Vagina (tissue), 2 donors: ENCODE measurements at regions of chr5 and their contacts with region 1.

Region 1: DNA sequence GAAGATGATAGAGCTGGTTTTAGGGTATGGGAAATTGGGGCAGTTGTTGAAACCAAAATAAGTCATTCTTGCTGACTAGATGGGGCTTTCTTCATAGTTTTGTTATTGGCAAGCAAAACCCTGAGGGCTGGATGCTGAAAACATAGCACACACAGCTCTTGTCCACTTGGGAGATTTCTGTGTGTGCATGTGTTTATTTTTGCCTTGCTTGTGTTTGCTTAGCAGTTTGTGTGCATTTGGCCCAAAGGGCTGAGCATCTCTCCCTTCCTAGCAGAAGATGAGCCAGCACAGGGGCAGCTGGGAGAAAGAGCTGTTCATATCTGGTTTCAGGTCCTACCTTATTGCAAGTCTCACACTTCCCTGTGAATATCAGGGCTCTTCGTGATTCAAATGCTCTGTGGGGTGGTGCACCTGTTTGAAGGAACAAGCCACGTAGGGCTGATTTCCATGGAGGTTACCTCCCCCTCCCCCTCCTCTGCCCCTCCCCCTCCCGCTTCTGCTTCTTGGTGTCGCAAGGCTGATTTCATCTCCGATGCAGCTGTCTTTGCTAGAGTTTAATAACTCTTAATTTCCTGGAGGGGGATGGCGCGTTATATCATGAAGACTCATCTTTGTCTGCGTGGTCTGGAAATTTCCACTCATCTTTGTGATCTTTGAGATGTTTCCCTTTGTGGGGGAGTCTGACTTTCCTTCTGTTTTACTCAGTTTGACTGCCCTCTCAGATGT is 296.5 kb downstream of the ARHGAP26 start:
- DNase-seq: no peak
- H3K4me3 ChIP-seq: no peak overlapping the region
- H3K27ac ChIP-seq: peak overlapping the region; percentile 37
- H3K4me1 ChIP-seq: peaks cover 47% of the 10 kb centered on the region
- H3K27me3 ChIP-seq: no peaks in the 10 kb centered on the region
- CTCF ChIP-seq: no peak
- POLR2A ChIP-seq: no peak

Region 2: GRCh38 chr5:142748568-142749249 is 318.0 kb before region 1 on chr5:
- intact Hi-C with region 1: no loop called
- DNase-seq: no peak
- H3K4me3 ChIP-seq: no peak overlapping the region
- H3K27ac ChIP-seq: no peak overlapping the region
- H3K4me1 ChIP-seq: peaks cover 8% of the 10 kb centered on the region
- H3K27me3 ChIP-seq: no peaks in the 10 kb centered on the region
- CTCF ChIP-seq: peak in 1 of 3 experiments; percentile 44
- POLR2A ChIP-seq: no peak

Region 3: GRCh38 chr5:142946547-142947426 is 119.9 kb before region 1 on chr5:
- intact Hi-C with region 1: no loop called
- DNase-seq: no peak
- H3K4me3 ChIP-seq: no peak overlapping the region
- H3K27ac ChIP-seq: no peak overlapping the region
- H3K4me1 ChIP-seq: no peaks in the 10 kb centered on the region
- H3K27me3 ChIP-seq: no peaks in the 10 kb centered on the region
- CTCF ChIP-seq: no peak
- POLR2A ChIP-seq: no peak

Region 4: DNA sequence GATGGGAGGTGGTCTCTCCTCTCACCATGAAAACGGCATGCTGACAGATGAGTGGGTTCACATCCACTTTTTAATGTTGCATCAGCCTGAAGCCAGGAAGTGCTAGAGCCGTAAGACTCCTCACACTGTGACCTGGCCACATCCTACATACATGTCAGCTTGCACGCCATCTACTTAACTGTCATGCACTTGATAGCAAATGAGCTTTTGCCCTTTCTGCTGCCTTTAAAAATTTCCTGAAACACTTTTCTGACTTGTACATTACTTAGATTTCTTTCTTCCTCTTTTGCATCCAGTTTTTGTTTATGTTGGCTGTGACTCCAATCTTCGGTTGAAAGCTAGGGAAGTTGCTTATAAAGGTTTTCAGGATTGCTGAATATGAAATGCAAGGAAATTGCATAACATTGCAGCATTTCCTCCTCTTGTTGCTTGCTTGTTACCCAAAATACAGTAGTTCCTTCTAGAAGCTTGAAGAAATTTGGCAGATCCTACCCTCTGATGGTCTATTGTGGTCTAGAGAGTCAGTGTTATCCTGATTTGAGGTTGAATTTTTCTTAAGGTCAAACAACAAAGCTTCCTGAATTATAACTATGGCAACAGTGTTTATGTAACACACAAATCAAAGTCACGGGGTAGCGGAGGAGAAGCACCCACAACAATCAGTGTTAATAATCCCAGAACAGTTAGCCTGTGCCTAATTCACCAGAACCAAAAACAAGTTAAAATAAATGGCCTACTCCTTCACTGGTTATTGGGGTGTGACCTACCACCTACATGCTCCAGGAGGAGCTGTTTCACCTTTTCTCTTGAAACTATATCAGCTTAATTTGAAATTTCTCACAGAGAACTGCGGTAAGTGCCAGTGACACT is 64.0 kb before region 1 on chr5:
- intact Hi-C with region 1: loop called (anchors 10 kb)
- DNase-seq: no peak
- H3K4me3 ChIP-seq: no peak overlapping the region
- H3K27ac ChIP-seq: peak overlapping the region; percentile 58
- H3K4me1 ChIP-seq: peaks cover 28% of the 10 kb centered on the region
- H3K27me3 ChIP-seq: no peaks in the 10 kb centered on the region
- CTCF ChIP-seq: peak; percentile 12 to 47 (median 32)
- POLR2A ChIP-seq: no peak

Region 5: GRCh38 chr5:143108498-143109117 is 41.9 kb after region 1 on chr5:
- intact Hi-C with region 1: no loop called
- DNase-seq: no peak
- H3K4me3 ChIP-seq: no peak overlapping the region
- H3K27ac ChIP-seq: no peak overlapping the region
- H3K4me1 ChIP-seq: peaks cover 23% of the 10 kb centered on the region
- H3K27me3 ChIP-seq: no peaks in the 10 kb centered on the region
- CTCF ChIP-seq: no peak
- POLR2A ChIP-seq: no peak

Region 6: GRCh38 chr5:143153332-143154119 is 86.8 kb after region 1 on chr5:
- intact Hi-C with region 1: loop called (anchors 5 kb)
- DNase-seq: no peak
- H3K4me3 ChIP-seq: no peak overlapping the region
- H3K27ac ChIP-seq: peak overlapping the region; percentile 66
- H3K4me1 ChIP-seq: peaks cover 47% of the 10 kb centered on the region
- H3K27me3 ChIP-seq: no peaks in the 10 kb centered on the region
- CTCF ChIP-seq: no peak
- POLR2A ChIP-seq: no peak